Colonic mucosa (tissue), 4 donors: ENCODE measurements at regions of chr3 and their contacts with region 1.

Region 1: GRCh38 chr3:52444860-52445793 is at the start of gene SEMA3G:
- DNase-seq: peak; percentile 81
- H3K4me3 ChIP-seq: no peak within 1 kb of the TSS
- H3K27ac ChIP-seq: no peak within 1 kb of the TSS
- H3K4me1 ChIP-seq: no peaks in the 10 kb centered on the region
- H3K27me3 ChIP-seq: no peaks in the 10 kb centered on the region
- CTCF ChIP-seq: peak; percentile 60
- total RNA-seq, gene SEMA3G: 2.4 to 2.6 TPM

Region 2: GRCh38 chr3:52231502-52232293 is 213.4 kb before region 1 on chr3:
- intact Hi-C with region 1: loop called (anchors 5 kb)
- DNase-seq: peak; percentile 84
- H3K4me3 ChIP-seq: no peak overlapping the region
- H3K27ac ChIP-seq: no peak overlapping the region
- H3K4me1 ChIP-seq: no peaks in the 10 kb centered on the region
- H3K27me3 ChIP-seq: no peaks in the 10 kb centered on the region
- CTCF ChIP-seq: peak; percentile 96

Region 3: GRCh38 chr3:52428151-52429005 is 16.7 kb before region 1 on chr3:
- intact Hi-C with region 1: loop called (anchors 2 kb)
- DNase-seq: peak; percentile 69
- H3K4me3 ChIP-seq: no peak overlapping the region
- H3K27ac ChIP-seq: no peak overlapping the region
- H3K4me1 ChIP-seq: no peaks in the 10 kb centered on the region
- H3K27me3 ChIP-seq: no peaks in the 10 kb centered on the region
- CTCF ChIP-seq: peak; percentile 59